GM13976 (cell line): ENCODE measurements at regions of chr18 and their contacts with region 1.

Region 1: DNA sequence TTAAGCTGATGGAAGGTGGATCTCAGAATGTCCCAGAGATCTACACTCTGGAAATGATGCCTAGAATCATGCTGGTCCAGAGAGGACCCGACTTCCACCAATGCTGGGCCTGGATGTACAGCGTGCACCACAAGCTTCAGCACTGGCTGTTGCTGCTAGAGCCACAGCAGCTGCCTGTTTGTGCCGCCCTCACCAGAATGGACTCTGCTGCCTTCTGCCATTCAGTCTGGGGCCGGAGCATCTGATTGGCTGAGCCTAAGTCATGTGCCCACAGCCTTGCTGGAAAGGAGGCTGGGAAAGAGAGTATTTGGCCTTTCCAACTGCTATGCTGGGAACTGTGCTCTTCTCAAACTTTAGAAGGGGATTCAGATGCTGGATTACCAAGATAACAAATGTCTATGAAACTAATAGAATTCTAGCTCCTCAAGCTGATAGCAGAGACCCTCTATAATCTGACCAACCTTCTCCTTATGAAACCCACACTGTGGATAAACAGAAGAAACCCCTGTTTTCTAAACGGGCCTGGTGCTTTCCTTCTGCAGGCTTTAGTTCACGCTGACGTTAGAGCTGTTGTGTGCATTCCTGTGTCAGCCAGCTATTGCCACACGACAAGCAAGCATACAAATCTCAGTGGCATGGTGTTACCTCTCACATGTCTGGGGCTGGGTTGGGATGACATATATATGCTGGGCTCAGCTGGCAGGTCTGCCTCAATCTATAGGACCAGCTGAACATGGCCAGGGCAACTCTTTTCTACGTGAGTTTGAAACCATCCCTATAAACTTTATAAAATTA is 4.1 kb upstream of the LOXHD1 start:
- DNase-seq: no peak
- CTCF ChIP-seq: no peak

Region 2: DNA sequence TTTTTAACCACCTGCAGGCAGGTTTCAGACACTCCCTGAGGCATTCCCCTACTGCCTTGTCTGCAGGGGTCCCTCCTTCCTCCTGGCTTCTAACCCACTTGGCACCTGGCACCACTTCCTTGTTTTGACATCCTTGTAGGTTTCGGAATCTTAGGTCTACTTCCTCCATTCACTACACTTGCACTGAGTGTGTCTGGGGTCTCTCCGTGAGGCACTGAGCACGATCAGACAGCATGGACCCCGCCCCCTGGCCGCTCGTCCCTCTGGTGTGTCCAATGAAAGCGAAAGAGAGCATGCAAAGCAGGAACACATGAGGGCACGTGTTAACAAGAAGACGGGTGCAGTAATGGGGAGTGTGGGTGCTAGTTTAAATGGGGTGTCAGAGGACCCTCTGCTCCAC is 493.2 kb before region 1 on chr18:
- in situ Hi-C with region 1: loop called (anchors 10 kb)
- DNase-seq: peak; percentile 72
- CTCF ChIP-seq: no peak

Region 3: DNA sequence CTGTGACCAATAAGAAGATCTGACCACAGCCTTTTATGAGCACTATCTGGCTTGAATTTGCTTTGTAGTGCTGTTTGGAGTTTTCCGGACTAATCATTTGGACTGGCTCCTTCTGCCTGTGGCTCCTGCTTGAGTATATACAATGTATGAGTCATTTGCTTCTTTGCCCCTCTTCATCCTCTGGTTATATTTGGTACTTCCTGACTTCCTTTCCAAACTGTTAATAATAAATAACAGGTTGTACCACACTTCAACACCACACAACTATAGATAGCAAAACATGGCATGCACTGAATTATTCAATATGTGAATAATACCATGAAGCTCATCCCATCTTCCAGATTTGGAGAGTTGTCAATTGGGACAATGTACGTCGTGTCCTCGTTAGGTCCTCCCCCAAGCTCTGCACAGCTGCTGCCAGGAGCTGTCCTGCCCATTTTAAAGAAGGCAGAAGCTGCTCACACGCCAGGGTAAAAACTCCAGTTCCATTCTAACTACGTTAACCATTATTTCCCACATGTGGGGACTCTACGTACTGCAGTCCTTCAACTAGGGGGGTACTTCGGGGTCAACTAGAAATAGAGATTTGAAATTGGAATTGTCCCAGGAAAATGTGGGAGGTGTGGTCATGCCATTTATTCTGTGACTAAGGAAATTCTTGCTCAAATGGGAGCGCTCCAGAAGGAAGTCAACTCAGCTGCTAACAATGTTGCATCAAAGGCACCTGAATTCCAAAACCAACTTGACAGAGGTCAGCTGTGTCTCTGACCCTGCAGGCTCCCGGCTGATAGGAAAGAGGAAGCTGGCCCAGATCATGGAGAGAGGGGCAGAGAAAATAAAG is 57.6 kb after region 1 on chr18:
- in situ Hi-C with region 1: no loop called
- DNase-seq: no peak
- CTCF ChIP-seq: no peak

Region 4: GRCh38 chr18:47062471-47062870 is 401.3 kb after region 1 on chr18:
- in situ Hi-C with region 1: no loop called
- DNase-seq: no peak
- CTCF ChIP-seq: no peak